CD4-positive, alpha-beta memory T cell (primary cell): ENCODE measurements at regions of chr15 and their contacts with region 1.

Region 1: DNA sequence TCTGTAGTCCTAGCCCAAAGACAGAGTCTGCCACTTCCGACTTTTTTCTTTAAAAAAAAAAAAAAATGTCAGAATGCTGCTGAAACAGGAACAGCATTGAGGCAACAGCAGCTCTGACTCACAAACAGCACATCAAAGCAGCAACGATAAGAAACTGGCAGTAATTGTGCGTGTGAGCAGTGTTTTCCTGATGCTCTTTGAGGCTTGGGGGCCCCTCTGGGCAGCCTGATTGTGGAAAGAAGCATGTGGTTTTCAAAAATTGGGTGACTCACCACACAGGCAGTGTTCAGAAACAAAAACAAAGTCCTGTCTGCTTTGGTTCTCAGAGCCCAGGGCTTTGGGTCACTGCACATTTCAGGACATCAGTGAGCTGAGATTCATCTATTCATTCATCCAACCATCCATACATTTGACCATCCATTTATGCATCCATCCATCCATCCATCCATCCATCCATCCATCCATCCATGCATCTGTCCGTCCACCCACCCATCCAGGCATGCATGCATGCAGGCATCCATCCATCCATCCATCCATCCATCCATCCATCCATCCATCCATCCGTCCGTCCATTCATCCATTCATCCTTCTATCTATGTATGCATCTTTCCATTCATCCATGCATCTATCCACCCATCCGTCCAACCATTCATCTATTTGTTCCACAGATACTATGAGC is 308.4 kb downstream of the RPLP1 start:
- DNase-seq: peak; percentile 83 to 94 (median 86)
- H3K4me3 ChIP-seq: no peak overlapping the region
- H3K4me3 Mint-ChIP-seq: peak overlapping the region; percentile 37 to 72 (median 60)
- H3K27ac ChIP-seq: no peak overlapping the region
- H3K27ac Mint-ChIP-seq: peak overlapping the region; percentile 35 to 97 (median 90)
- H3K4me1 ChIP-seq: peaks cover 69% of the 10 kb centered on the region
- H3K4me1 Mint-ChIP-seq: peaks cover 56 to 69% (median 65%) of the 10 kb centered on the region in 4 donors
- H3K27me3 ChIP-seq: no peaks in the 10 kb centered on the region
- H3K27me3 Mint-ChIP-seq: peaks cover 0 to 2% of the 10 kb centered on the region in 2 donors

Region 2: GRCh38 chr15:69713726-69714559 is 47.1 kb before region 1 on chr15:
- CTCF ChIA-PET with region 1: interaction called, 5 read pairs
- POLR2A ChIA-PET with region 1: interaction called, 117 read pairs
- intact Hi-C with region 1: loop called (anchors 1 kb)
- DNase-seq: peak; percentile 80 to 92 (median 85)
- H3K4me3 ChIP-seq: no peak overlapping the region
- H3K4me3 Mint-ChIP-seq: peak overlapping the region; percentile 54 to 88 (median 73)
- H3K27ac ChIP-seq: peak overlapping the region; percentile 11
- H3K27ac Mint-ChIP-seq: peak overlapping the region; percentile 81 to 95 (median 90)
- H3K4me1 ChIP-seq: peaks cover 73% of the 10 kb centered on the region
- H3K4me1 Mint-ChIP-seq: peaks cover 47 to 76% (median 64%) of the 10 kb centered on the region in 4 donors
- H3K27me3 ChIP-seq: no peaks in the 10 kb centered on the region
- H3K27me3 Mint-ChIP-seq: no peaks in the 10 kb centered on the region

Region 3: DNA sequence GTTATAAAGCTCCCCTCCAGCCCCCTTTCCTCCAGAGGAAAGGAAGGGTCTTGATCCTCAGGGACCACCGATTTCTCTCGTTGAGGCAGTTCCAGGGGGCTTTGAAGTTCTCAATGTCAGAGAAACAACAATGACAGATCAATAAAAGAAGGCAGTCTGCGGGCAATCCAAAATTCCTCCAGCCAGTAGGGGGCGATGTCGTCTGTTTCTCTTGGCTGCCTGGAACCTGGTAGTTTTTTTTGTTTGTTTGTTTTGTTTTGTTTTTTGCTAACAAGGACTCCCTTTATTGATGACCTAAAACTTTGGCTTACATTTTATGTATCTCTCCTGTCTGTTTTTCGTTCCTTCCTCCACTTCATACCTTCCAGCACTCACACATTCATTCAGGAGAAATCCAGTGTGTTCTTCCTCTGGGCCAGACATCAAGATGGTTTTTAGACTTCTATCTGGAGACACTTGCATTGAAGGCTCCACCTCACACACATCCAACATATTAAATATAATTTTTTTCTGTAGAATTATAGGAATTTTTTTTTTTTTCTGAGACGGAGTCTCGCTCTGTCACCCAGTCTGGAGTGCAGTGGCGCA is 31.8 kb before region 1 on chr15:
- CTCF ChIA-PET with region 1: interaction called, 12 read pairs
- POLR2A ChIA-PET with region 1: interaction called, 117 read pairs
- intact Hi-C with region 1: loop called (anchors 2 kb)
- DNase-seq: peak; percentile 59 to 68 (median 64)
- H3K4me3 ChIP-seq: no peak overlapping the region
- H3K4me3 Mint-ChIP-seq: peak overlapping the region in 1 of 8 donors; percentile 10
- H3K27ac ChIP-seq: no peak overlapping the region
- H3K27ac Mint-ChIP-seq: peak overlapping the region in 1 of 7 donors; percentile 0
- H3K4me1 ChIP-seq: peaks cover 20% of the 10 kb centered on the region
- H3K4me1 Mint-ChIP-seq: peaks cover 9 to 32% (median 23%) of the 10 kb centered on the region in 4 donors
- H3K27me3 ChIP-seq: no peaks in the 10 kb centered on the region
- H3K27me3 Mint-ChIP-seq: peaks cover 0 to 2% of the 10 kb centered on the region in 2 donors

Region 4: DNA sequence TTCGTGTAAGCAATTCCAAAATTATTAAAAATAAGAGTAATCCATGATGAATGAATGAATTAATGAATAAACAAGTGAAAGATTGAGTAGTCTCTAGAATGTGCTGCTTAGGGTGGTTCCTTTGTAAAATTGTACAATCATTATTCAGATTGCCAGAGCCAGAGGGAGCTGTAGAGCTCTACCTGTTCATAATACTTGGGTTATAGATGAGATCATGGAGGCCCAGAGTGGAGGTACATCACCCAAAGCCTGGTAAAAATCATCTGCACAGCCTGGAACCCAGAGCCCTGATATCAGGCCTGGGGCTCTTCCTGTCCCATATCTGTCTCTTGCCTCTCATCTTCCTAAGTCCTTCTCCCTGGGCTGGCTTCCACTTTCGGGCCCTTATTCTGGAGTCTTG is 11.2 kb before region 1 on chr15:
- CTCF ChIA-PET with region 1: interaction called, 13 read pairs
- POLR2A ChIA-PET with region 1: interaction called, 10 read pairs
- intact Hi-C with region 1: loop called (anchors 1 kb)
- DNase-seq: peak in 3 of 5 donors; percentile 21 to 35 (median 26)
- H3K4me3 ChIP-seq: no peak overlapping the region
- H3K4me3 Mint-ChIP-seq: no peak overlapping the region
- H3K27ac ChIP-seq: no peak overlapping the region
- H3K27ac Mint-ChIP-seq: no peak overlapping the region
- H3K4me1 ChIP-seq: peaks cover 24% of the 10 kb centered on the region
- H3K4me1 Mint-ChIP-seq: peaks cover 18 to 47% (median 28%) of the 10 kb centered on the region in 4 donors
- H3K27me3 ChIP-seq: no peaks in the 10 kb centered on the region
- H3K27me3 Mint-ChIP-seq: peaks cover 0 to 5% of the 10 kb centered on the region in 2 donors

Region 5: GRCh38 chr15:70023064-70023768 is 262.2 kb after region 1 on chr15:
- CTCF ChIA-PET with region 1: no interaction called
- POLR2A ChIA-PET with region 1: interaction called, 11 read pairs
- intact Hi-C with region 1: loop called (anchors 2 kb)
- DNase-seq: peak; percentile 75 to 90 (median 80)
- H3K4me3 ChIP-seq: no peak overlapping the region
- H3K4me3 Mint-ChIP-seq: peak overlapping the region in 4 of 8 donors; percentile 55 to 77 (median 68)
- H3K27ac ChIP-seq: no peak overlapping the region
- H3K27ac Mint-ChIP-seq: peak overlapping the region; percentile 71 to 96 (median 91)
- H3K4me1 ChIP-seq: peaks cover 20% of the 10 kb centered on the region
- H3K4me1 Mint-ChIP-seq: peaks cover 8 to 25% (median 17%) of the 10 kb centered on the region in 4 donors
- H3K27me3 ChIP-seq: no peaks in the 10 kb centered on the region
- H3K27me3 Mint-ChIP-seq: no peaks in the 10 kb centered on the region